Adrenal gland (tissue), 19 donors: ENCODE measurements at regions of chr9 and their contacts with region 1.

Region 1: GRCh38 chr9:37485389-37486219 is at the start of gene POLR1E:
- DNase-seq: peak; percentile 94 to 98 (median 96)
- H3K4me3 ChIP-seq: peak within 1 kb of the TSS in 3 of 4 donors; percentile 27 to 75 (median 29)
- H3K27ac ChIP-seq: peak within 1 kb of the TSS; percentile 50 to 87 (median 63)
- H3K4me1 ChIP-seq: peaks cover 16 to 22% of the 10 kb centered on the region in 2 donors
- H3K27me3 ChIP-seq: no peaks in the 10 kb centered on the region
- CTCF ChIP-seq: no peak
- POLR2A ChIP-seq: peak; percentile 45 to 82
- total RNA-seq, gene POLR1E: 17.1 to 113 (median 21.1) TPM

Region 2: DNA sequence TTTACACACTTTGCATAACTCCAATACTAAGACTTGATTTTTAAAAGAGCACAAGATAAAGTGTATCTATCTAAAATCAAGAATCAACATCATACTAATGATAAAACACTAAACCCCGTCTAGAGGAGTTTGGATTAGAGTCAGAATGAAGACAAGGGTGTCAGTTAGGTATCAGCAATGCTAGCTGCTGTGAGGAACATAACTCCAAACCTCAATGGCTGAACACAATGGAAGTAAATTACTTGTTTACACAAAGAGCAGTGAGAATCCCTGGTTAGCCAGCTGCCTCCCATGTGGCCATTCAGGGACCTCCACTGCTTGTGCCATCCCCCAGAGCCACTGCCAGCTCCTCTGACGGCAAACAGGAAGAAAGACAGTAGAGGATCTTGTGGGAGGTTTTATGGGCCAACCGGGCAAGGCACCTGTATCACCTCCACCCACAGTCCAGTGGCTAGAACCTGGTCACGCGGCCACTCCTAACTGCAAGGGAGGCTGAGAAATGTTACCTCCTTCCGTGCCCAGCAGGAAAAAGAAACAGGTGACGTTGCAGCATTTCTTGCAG is 87.1 kb before region 1 on chr9:
- intact Hi-C with region 1: no loop called
- DNase-seq: no peak
- H3K4me3 ChIP-seq: no peak overlapping the region
- H3K27ac ChIP-seq: no peak overlapping the region
- H3K4me1 ChIP-seq: no peaks in the 10 kb centered on the region
- H3K27me3 ChIP-seq: no peaks in the 10 kb centered on the region
- CTCF ChIP-seq: no peak
- POLR2A ChIP-seq: no peak

Region 3: DNA sequence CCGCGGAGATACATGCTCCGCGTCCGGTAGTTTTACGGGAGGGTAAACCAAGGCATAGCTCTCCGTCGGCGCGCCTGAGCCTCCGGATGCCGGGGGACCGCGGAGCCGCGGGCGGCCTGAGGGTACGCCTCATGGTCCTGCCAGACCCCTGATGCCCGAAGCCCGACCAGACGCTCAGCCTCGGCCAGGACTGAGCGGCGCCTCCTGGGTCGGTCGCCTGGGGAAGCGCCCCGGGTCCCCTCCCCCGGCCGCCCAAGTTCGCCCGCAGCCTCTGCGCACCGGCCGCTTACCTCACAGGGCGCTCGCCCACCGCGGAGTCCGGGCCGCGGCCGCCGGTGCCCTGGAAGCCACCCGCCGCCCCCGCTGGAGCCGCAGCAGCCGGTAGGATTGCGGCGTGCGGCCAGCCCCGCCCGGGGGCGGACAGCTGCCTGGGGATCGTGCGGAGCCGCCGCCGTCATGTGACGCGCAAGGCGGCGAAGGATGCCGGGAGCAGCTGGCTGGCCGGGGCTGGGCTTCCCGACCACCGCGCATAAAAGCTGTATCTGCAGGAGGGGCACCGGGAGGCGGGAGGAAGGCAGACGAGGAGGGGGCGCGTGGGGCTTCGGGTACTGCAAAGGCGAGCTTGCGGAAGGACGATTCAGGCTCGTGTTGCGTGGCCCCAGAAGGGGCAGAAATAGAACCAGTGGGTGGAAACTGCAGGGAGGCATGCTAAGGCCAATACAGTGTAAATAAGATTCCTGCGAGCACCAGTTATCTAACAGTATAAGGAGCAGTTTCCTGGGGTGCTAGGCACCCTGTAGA is 90.5 kb after region 1 on chr9 and contains the start of gene FBXO10:
- intact Hi-C with region 1: loop called (anchors 10 kb)
- DNase-seq: peak; percentile 70 to 83 (median 79)
- H3K4me3 ChIP-seq: peak within 1 kb of the TSS; percentile 44 to 93 (median 74)
- H3K27ac ChIP-seq: peak within 1 kb of the TSS; percentile 9 to 94 (median 90)
- H3K4me1 ChIP-seq: peaks cover 9 to 37% of the 10 kb centered on the region in 2 donors
- H3K27me3 ChIP-seq: no peaks in the 10 kb centered on the region
- CTCF ChIP-seq: no peak
- POLR2A ChIP-seq: peak; percentile 80 to 88
- total RNA-seq, gene FBXO10: 7.6 to 86.6 (median 12.4) TPM

Region 4: GRCh38 chr9:37582548-37583157 is 97.0 kb after region 1 on chr9:
- intact Hi-C with region 1: loop called (anchors 10 kb)
- DNase-seq: peak in 1 of 7 donors; percentile 27
- H3K4me3 ChIP-seq: no peak overlapping the region
- H3K27ac ChIP-seq: no peak overlapping the region
- H3K4me1 ChIP-seq: no peaks in the 10 kb centered on the region
- H3K27me3 ChIP-seq: no peaks in the 10 kb centered on the region
- CTCF ChIP-seq: peak; percentile 48 to 75 (median 68)
- POLR2A ChIP-seq: no peak

Region 5: GRCh38 chr9:37800631-37801286 is 315.2 kb after region 1 on chr9 and contains the start of gene DCAF10:
- intact Hi-C with region 1: loop called in 1 of 2 experiments (anchors 10 kb)
- DNase-seq: peak; percentile 84 to 91 (median 87)
- H3K4me3 ChIP-seq: peak within 1 kb of the TSS; percentile 19 to 91 (median 82)
- H3K27ac ChIP-seq: peak within 1 kb of the TSS; percentile 79 to 93 (median 90)
- H3K4me1 ChIP-seq: peaks cover 24 to 30% of the 10 kb centered on the region in 2 donors
- H3K27me3 ChIP-seq: no peaks in the 10 kb centered on the region
- CTCF ChIP-seq: peak in 2 of 6 experiments; percentile 12 to 42
- POLR2A ChIP-seq: peak; percentile 64 to 80
- total RNA-seq, gene DCAF10: 30.3 to 60.6 (median 48.0) TPM

Region 6: DNA sequence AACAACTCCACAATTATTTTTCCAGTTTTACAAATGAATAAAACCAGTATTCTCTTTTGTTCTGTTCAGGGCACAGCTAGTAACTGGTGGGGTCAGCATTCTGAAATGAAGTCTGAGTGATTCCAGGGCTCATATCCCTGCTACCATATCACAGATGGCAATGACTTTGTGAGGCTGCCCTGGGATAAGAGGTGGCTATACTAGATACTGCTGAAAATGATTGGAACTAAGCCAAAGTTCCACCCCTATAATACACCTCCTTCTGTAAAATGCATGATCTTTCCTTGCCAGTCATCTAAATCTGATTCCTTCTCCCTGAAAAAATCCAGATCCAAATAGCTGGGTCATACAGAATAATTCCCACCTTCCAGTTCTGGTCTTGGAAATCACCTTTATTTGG is 403.9 kb after region 1 on chr9:
- intact Hi-C with region 1: no loop called
- DNase-seq: no peak
- H3K4me3 ChIP-seq: no peak overlapping the region
- H3K27ac ChIP-seq: no peak overlapping the region
- H3K4me1 ChIP-seq: no peaks in the 10 kb centered on the region
- H3K27me3 ChIP-seq: no peaks in the 10 kb centered on the region
- CTCF ChIP-seq: no peak
- POLR2A ChIP-seq: no peak